IMR-90 (cell line): ENCODE measurements at regions of chr12 and their contacts with region 1.

Region 1: GRCh38 chr12:96427269-96427729 is 27.1 kb upstream of the CDK17 start:
- DNase-seq: peak; percentile 100
- ATAC-seq: peak; percentile 88
- H3K4me3 ChIP-seq: peak overlapping the region; percentile 46
- H3K27ac ChIP-seq: peak overlapping the region; percentile 99
- H3K4me1 ChIP-seq: peaks cover 22% of the 10 kb centered on the region
- H3K27me3 ChIP-seq: no peaks in the 10 kb centered on the region
- CTCF ChIP-seq: no peak
- POLR2A ChIP-seq: peak; percentile 88
- RAD21 ChIP-seq: peak; percentile 39; the same call in 1 of the 2 replicates

Region 2: DNA sequence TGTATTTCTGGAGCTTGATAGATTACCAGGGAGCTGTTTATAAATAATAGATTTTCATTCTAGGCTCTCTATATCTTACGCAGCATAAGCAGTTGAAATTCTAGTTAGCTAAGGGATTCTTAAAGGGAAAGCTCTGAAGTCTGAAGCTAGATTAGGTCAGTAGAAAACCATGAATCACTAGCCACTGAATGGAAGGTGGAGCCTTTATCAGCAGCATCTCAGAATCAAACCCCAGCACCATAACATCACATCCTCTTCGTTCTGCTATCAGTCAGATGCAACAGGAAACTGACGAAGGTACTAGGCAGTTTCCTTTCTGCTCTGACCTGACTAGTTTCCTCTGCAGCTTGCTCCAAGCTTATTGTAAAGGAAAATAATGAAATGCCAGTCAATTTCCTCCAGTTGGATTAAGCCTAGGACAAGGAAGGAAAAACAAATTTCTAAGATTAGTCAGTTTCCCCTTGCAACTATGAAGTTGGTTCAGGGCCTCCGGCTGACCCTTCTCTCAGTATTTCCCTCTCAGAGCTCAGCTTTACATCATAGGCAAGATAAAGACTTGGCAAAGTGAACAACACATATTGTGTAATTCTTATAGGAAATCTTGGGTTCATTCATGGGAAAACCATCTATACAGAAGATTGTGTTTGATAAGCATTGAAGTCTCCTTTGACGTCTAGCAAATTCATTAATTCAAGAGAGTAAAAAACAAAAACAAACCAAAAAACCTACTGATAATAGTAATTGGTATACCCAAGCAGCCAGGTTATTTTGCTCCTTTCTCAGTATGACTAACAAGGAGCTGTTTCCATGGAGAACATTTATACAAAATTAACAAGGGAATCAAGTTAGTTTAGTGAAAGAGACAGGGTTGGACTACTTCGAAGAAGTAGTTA is 18.6 kb after region 1 on chr12:
- CTCF ChIA-PET with region 1: no interaction called
- POLR2A ChIA-PET with region 1: interaction called, 14 read pairs
- dilution Hi-C with region 1: no loop called
- in situ Hi-C with region 1: no loop called
- intact Hi-C with region 1: no loop called
- DNase-seq: peak; percentile 99
- ATAC-seq: peak; percentile 93
- H3K4me3 ChIP-seq: no peak overlapping the region
- H3K27ac ChIP-seq: peak overlapping the region; percentile 68
- H3K4me1 ChIP-seq: peaks cover 7% of the 10 kb centered on the region
- H3K27me3 ChIP-seq: no peaks in the 10 kb centered on the region
- CTCF ChIP-seq: no peak
- POLR2A ChIP-seq: no peak; the same call in 1 of the 2 replicates
- RAD21 ChIP-seq: peak; percentile 26

Region 3: GRCh38 chr12:96473394-96474093 is 46.2 kb after region 1 on chr12:
- CTCF ChIA-PET with region 1: no interaction called
- POLR2A ChIA-PET with region 1: no interaction called
- dilution Hi-C with region 1: no loop called
- in situ Hi-C with region 1: no loop called
- intact Hi-C with region 1: no loop called
- DNase-seq: peak; percentile 76
- ATAC-seq: peak; percentile 68
- H3K4me3 ChIP-seq: no peak overlapping the region
- H3K27ac ChIP-seq: peak overlapping the region; percentile 73; the same call in 1 of the 2 replicates
- H3K4me1 ChIP-seq: peaks cover 14% of the 10 kb centered on the region
- H3K27me3 ChIP-seq: no peaks in the 10 kb centered on the region; the same call in 1 of the 2 replicates
- CTCF ChIP-seq: no peak
- POLR2A ChIP-seq: no peak
- RAD21 ChIP-seq: no peak